CD14-positive monocyte (primary cell): ENCODE measurements at regions of chr7 and their contacts with region 1.

Region 1: DNA sequence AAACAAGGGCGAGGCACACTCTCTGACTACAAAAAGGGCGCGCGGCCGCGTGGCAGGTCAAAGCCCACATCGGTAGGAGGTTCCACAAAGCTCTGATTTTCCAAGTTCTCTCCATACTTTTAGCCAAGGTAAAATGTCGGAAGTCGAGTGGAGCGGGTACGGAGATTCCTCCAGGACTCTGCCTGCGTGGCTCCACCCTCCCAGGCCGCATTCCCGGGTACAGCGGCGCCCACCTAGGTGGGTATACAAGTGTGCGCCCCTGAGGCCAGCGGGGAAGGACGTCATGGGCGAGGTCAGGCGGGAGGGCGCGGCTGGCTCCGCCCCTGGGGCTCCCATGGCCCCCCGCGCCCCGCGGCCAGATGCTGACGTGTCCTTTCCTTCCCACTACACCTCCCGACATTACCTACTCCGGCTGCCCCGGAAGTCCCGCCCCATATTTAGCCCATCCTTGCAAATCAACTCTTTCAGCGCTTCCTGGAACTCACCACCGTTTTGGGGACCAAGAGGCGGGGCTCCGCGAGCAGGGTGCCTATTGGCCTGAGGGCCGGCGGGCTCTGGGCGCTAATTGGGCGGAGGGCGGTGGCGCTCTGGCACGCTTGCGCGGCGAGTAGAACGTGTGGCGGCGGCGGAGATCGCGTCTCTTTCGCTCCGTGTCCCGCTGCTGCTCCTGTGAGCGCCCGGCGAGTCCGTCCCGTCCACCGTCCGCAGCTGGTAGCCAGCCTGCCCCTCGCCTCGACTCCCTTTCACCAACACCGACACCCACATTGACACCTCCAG is at the start of gene SND1:
- DNase-seq: peak; percentile 96 to 98 (median 97)
- H3K4me3 ChIP-seq: peak within 1 kb of the TSS; percentile 65 to 92 (median 82)
- H3K4me3 Mint-ChIP-seq: peak within 1 kb of the TSS; percentile 98 to 99
- H3K27ac ChIP-seq: peak within 1 kb of the TSS; percentile 84 to 94
- H3K27ac Mint-ChIP-seq: peak within 1 kb of the TSS; percentile 91 to 98 (median 97)
- H3K4me1 ChIP-seq: peaks cover 43 to 52% of the 10 kb centered on the region in 2 donors
- H3K4me1 Mint-ChIP-seq: peaks cover 49% of the 10 kb centered on the region
- H3K27me3 ChIP-seq: no peaks in the 10 kb centered on the region
- H3K27me3 Mint-ChIP-seq: peaks cover 0 to 2% (median 2%) of the 10 kb centered on the region in 3 donors
- CTCF ChIP-seq: no peak
- polyA plus RNA-seq, gene SND1: 46.5 to 97.3 (median 79.8) TPM

Region 2: GRCh38 chr7:127392566-127393367 is 259.0 kb before region 1 on chr7 and contains the start of gene ZNF800:
- intact Hi-C with region 1: loop called in 1 of 2 experiments (anchors 10 kb)
- DNase-seq: peak; percentile 89 to 93 (median 90)
- H3K4me3 ChIP-seq: peak within 1 kb of the TSS; percentile 85 to 96 (median 93)
- H3K4me3 Mint-ChIP-seq: peak within 1 kb of the TSS; percentile 99 to 100
- H3K27ac ChIP-seq: peak within 1 kb of the TSS; percentile 97 to 98
- H3K27ac Mint-ChIP-seq: peak within 1 kb of the TSS; percentile 92 to 99 (median 97)
- H3K4me1 ChIP-seq: peaks cover 16 to 26% of the 10 kb centered on the region in 2 donors
- H3K4me1 Mint-ChIP-seq: peaks cover 56% of the 10 kb centered on the region
- H3K27me3 ChIP-seq: peaks cover 2 to 13% of the 10 kb centered on the region in 2 donors
- H3K27me3 Mint-ChIP-seq: peaks cover 10 to 21% (median 19%) of the 10 kb centered on the region in 3 donors
- CTCF ChIP-seq: no peak
- polyA plus RNA-seq, gene ZNF800: 11.8 to 19.6 (median 16.2) TPM

Region 3: DNA sequence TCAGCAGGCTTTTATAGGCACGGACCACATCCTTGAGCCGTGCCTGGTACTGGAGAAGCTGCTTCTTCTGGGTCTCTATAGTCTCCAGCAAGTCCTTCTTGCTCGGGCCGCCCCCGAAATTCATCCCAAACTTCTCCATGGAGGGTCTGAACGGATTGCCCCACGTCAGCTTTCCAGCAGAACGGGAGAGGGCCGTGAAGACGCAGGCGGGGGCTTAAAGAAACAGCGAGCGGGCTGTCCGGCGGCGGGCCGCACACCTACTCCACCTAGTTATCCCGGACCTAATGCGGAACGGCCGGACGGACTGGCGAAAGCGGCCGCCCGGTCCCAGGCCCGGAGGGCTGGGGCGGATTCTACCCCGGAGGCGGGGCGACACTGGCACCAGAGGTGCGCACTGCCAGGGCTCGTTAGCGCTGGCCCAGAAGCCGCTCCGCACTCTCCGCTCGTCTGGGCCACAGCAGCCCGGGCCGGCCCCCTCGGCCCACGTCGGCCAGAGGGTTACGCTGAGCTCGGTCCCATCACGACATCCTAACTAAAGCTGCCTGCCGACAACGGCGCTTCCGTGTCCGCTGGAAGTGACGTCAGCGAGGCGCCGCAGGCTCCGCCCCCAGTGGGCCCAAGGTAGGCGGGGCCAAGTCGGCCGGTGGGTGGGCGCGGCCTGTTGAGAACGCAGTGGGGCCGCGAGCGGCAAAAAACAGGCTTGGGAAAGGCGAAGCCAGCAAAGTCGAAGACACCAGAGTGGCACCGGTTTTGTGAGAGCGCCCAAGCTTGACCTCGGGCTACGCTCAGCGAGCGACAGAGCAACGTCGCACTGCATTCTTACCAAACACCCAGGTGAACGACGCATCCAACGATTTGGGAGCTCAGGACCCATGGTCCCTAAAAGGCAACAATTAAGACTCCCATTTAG is 66.4 kb before region 1 on chr7 and contains the start of gene GCC1:
- intact Hi-C with region 1: loop called (anchors 2 to 5 kb)
- DNase-seq: peak; percentile 82 to 89 (median 88)
- H3K4me3 ChIP-seq: peak within 1 kb of the TSS; percentile 64 to 91 (median 88)
- H3K4me3 Mint-ChIP-seq: peak within 1 kb of the TSS; percentile 91 to 93
- H3K27ac ChIP-seq: peak within 1 kb of the TSS; percentile 76 to 90
- H3K27ac Mint-ChIP-seq: peak within 1 kb of the TSS; percentile 89 to 97 (median 92)
- H3K4me1 ChIP-seq: peaks cover 53 to 65% of the 10 kb centered on the region in 2 donors
- H3K4me1 Mint-ChIP-seq: peaks cover 70% of the 10 kb centered on the region
- H3K27me3 ChIP-seq: no peaks in the 10 kb centered on the region
- H3K27me3 Mint-ChIP-seq: no peaks in the 10 kb centered on the region
- CTCF ChIP-seq: no peak
- polyA plus RNA-seq, gene GCC1: 5.9 to 9.2 (median 6.4) TPM